ENCODE measurements at regions of chrX and their contacts with region 1.

Region 1: GRCh38 chrX:47560831-47561652 is at the start of gene ARAF:
- DNase-seq: peak; percentile 95 to 99 (median 97)
- H3K4me3 ChIP-seq: peak within 1 kb of the TSS; percentile 69 to 74
- H3K4me3 Mint-ChIP-seq: peak within 1 kb of the TSS; percentile 84 to 97 (median 92)
- H3K27ac ChIP-seq: peak within 1 kb of the TSS; percentile 91
- H3K27ac Mint-ChIP-seq: peak within 1 kb of the TSS; percentile 92 to 99 (median 98)
- H3K4me1 ChIP-seq: peaks cover 43% of the 10 kb centered on the region
- H3K4me1 Mint-ChIP-seq: peaks cover 23 to 56% (median 40%) of the 10 kb centered on the region in 4 donors
- H3K27me3 ChIP-seq: no peaks in the 10 kb centered on the region
- H3K27me3 Mint-ChIP-seq: no peaks in the 10 kb centered on the region
- total RNA-seq, gene ARAF: 107 to 111 TPM

Region 2: GRCh38 chrX:47482512-47483309 is 78.3 kb before region 1 on chrX and contains the start of gene ZNF41:
- CTCF ChIA-PET with region 1: no interaction called
- POLR2A ChIA-PET with region 1: interaction called, 3 read pairs
- intact Hi-C with region 1: loop called (anchors 2 kb)
- DNase-seq: peak; percentile 78 to 86 (median 83)
- H3K4me3 ChIP-seq: peak within 1 kb of the TSS; percentile 70 to 88
- H3K4me3 Mint-ChIP-seq: peak within 1 kb of the TSS; percentile 82 to 95 (median 90)
- H3K27ac ChIP-seq: peak within 1 kb of the TSS; percentile 77
- H3K27ac Mint-ChIP-seq: peak within 1 kb of the TSS; percentile 85 to 99 (median 97)
- H3K4me1 ChIP-seq: peaks cover 29% of the 10 kb centered on the region
- H3K4me1 Mint-ChIP-seq: peaks cover 12 to 41% (median 24%) of the 10 kb centered on the region in 4 donors
- H3K27me3 ChIP-seq: no peaks in the 10 kb centered on the region
- H3K27me3 Mint-ChIP-seq: no peaks in the 10 kb centered on the region
- total RNA-seq, gene ZNF41: 16.1 TPM

Region 3: DNA sequence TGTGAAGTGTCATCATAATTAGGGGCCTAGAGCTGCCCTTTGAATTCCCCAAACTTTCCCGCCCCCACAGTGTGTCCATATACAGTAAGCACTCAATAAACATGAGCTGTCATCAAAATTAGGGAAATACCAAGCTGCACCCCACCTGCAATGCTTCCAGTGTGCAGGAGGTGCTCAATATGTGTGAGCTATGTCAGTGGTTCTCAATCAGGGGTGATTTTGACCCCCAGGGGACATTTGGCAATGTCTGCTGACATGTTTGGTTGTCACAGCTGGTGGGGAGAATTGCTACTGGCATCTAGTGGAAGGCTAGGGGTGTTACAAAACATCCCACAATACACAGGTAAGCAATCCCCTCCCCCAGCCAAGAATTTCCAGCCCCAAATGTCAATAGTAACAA is 67.9 kb after region 1 on chrX:
- CTCF ChIA-PET with region 1: interaction called, 4 read pairs
- POLR2A ChIA-PET with region 1: interaction called, 7 read pairs
- intact Hi-C with region 1: loop called (anchors 1 kb)
- DNase-seq: peak in 3 of 5 donors; percentile 21 to 42 (median 23)
- H3K4me3 ChIP-seq: no peak overlapping the region
- H3K4me3 Mint-ChIP-seq: peak overlapping the region; percentile 80 to 90 (median 86)
- H3K27ac ChIP-seq: no peak overlapping the region
- H3K27ac Mint-ChIP-seq: peak overlapping the region in 6 of 7 donors; percentile 53 to 88 (median 75)
- H3K4me1 ChIP-seq: peaks cover 17% of the 10 kb centered on the region
- H3K4me1 Mint-ChIP-seq: peaks cover 13 to 24% (median 20%) of the 10 kb centered on the region in 4 donors
- H3K27me3 ChIP-seq: no peaks in the 10 kb centered on the region
- H3K27me3 Mint-ChIP-seq: no peaks in the 10 kb centered on the region

Region 4: GRCh38 chrX:47658684-47659515 is 97.9 kb after region 1 on chrX and contains the start of gene UXT:
- CTCF ChIA-PET with region 1: no interaction called
- POLR2A ChIA-PET with region 1: no interaction called
- intact Hi-C with region 1: loop called (anchors 1 kb)
- DNase-seq: peak; percentile 89 to 96 (median 93)
- H3K4me3 ChIP-seq: peak within 1 kb of the TSS; percentile 61 to 90
- H3K4me3 Mint-ChIP-seq: peak within 1 kb of the TSS; percentile 87 to 93 (median 91)
- H3K27ac ChIP-seq: peak within 1 kb of the TSS; percentile 95
- H3K27ac Mint-ChIP-seq: peak within 1 kb of the TSS; percentile 96 to 99 (median 98)
- H3K4me1 ChIP-seq: peaks cover 16% of the 10 kb centered on the region
- H3K4me1 Mint-ChIP-seq: peaks cover 3 to 28% (median 8%) of the 10 kb centered on the region in 4 donors
- H3K27me3 ChIP-seq: no peaks in the 10 kb centered on the region
- H3K27me3 Mint-ChIP-seq: no peaks in the 10 kb centered on the region
- total RNA-seq, gene UXT: 172 to 188 TPM

Region 5: DNA sequence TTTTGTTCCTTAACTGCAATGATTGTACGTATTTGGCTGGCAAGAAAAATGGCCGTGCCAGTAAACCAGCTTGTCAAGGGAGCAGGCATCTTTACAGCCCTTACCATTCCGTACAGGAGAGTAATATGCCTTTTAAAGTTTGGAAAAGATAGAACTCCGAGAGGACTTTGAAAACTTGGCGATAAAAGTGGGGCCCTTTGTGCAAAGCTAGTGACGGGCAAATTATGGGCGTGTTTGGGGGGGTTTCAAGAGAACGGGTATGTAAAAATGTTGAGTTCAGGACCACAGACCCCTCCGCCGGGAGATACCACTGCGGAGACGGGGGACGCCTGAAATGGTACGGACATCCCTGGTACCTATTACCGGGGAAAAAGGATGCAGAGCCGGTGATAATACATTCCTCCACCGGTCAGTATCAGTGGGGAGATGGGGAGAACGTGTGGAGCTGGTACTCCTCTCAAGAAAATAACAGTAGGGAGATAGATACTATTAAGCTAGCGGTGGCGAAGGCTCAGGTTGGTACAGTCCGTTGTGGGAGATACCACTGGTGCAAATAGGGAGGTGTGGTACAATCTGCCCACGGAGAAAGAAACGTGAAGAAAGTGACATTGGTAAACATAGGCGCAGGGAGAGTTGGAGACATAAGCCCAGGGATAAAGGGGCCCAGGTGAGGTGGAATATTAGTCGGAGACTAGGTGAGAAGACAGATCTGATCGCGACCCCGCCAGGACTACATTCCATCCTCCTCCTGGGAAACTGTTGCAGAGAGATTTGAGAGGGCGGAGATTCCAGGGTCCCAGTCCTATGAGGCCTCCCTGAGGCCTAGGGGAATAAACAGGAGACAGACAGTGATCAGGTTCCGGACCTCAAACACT is 460.2 kb after region 1 on chrX:
- CTCF ChIA-PET with region 1: no interaction called
- POLR2A ChIA-PET with region 1: interaction called, 3 read pairs
- intact Hi-C with region 1: loop called (anchors 2 kb)
- DNase-seq: peak; percentile 81 to 87 (median 86)
- H3K4me3 ChIP-seq: peak overlapping the region; percentile 84 to 96
- H3K4me3 Mint-ChIP-seq: peak overlapping the region; percentile 90 to 96 (median 92)
- H3K27ac ChIP-seq: peak overlapping the region; percentile 72
- H3K27ac Mint-ChIP-seq: peak overlapping the region; percentile 90 to 98 (median 95)
- H3K4me1 ChIP-seq: peaks cover 4% of the 10 kb centered on the region
- H3K4me1 Mint-ChIP-seq: peaks cover 4 to 23% (median 13%) of the 10 kb centered on the region in 4 donors
- H3K27me3 ChIP-seq: no peaks in the 10 kb centered on the region
- H3K27me3 Mint-ChIP-seq: no peaks in the 10 kb centered on the region